ENCODE measurements at regions of chr1 and their contacts with region 1.

Region 1: DNA sequence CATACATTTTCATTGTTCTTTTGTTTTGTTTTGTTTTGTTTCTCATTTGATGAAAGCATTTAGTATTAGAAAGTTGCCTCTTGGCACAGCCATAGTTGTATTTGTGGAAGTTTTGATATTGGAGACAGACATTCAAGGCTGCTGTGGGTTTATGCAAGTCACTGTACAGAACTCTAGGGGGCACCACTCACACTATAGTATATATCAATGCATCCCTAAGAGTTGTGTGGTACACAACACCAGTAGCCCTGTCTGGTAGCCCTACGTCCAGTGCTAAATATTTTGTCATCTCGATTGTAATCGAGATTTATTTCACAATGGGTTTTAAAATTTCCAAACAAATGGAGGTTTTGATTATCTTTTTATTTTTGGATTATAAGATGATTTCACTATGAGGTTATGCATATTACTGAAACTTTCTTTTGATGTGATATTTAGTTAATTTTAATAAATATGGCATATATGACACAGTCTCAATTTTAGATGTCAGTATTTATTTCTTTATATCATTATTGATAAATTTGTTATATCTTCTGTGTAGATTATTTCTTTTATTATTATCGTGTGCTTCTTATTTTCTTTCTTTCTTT is 112.2 kb downstream of the NR5A2 start:
- DNase-seq: peak; percentile 25
- H3K4me3 ChIP-seq: no peak overlapping the region
- H3K27ac ChIP-seq: no peak overlapping the region
- H3K4me1 ChIP-seq: no peaks in the 10 kb centered on the region
- H3K27me3 ChIP-seq: no peaks in the 10 kb centered on the region
- CTCF ChIP-seq: no peak

Region 2: DNA sequence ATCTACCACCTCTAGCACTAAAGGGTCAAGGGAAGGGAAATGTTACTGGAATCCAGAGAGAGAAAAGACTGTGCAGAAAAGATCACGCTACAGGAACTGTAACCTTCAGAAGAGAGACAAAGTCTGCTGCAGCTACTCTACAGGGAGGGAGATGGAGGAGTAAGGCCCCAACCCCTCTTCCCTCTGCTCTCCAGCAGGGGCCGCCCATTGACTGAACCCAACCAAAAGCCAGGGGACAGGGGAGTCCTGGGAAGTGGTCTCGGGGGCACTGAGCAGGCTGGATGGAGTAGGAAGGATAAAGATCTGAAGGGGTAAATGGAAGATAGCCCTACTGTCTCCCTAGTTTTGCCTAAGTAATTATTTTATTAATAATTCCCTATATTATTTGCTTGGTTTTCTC is 185.1 kb before region 1 on chr1:
- intact Hi-C with region 1: loop called (anchors 10 kb)
- DNase-seq: peak; percentile 51
- H3K4me3 ChIP-seq: no peak overlapping the region
- H3K27ac ChIP-seq: no peak overlapping the region
- H3K4me1 ChIP-seq: no peaks in the 10 kb centered on the region
- H3K27me3 ChIP-seq: no peaks in the 10 kb centered on the region
- CTCF ChIP-seq: peak; percentile 32

Region 3: DNA sequence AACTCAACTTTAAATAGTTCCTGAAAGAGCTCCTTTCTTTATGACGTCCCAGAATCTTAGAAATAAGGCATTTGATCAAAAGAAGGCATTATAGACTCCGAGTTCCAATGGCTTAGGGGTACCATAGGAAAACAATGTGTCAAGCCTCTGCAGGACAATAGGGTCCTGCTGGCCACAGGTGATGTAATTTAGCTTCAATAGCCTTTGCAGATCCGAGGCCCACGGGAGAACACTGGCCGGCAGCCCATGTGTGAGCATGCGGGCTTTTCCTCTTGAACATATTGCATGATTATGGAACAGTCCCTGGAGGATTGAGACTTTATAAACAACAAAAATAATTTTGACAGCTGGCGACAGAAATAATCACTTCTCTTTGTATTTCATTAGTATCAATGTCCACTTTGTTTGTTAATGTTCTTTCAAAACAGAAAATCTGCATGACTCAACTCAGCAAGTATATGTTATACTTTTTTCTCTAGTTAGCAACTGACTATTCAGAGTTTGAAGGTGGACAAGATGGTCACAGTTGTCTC is 161.3 kb before region 1 on chr1:
- intact Hi-C with region 1: no loop called
- DNase-seq: no peak
- H3K4me3 ChIP-seq: no peak overlapping the region
- H3K27ac ChIP-seq: no peak overlapping the region
- H3K4me1 ChIP-seq: no peaks in the 10 kb centered on the region
- H3K27me3 ChIP-seq: no peaks in the 10 kb centered on the region
- CTCF ChIP-seq: no peak

Region 4: DNA sequence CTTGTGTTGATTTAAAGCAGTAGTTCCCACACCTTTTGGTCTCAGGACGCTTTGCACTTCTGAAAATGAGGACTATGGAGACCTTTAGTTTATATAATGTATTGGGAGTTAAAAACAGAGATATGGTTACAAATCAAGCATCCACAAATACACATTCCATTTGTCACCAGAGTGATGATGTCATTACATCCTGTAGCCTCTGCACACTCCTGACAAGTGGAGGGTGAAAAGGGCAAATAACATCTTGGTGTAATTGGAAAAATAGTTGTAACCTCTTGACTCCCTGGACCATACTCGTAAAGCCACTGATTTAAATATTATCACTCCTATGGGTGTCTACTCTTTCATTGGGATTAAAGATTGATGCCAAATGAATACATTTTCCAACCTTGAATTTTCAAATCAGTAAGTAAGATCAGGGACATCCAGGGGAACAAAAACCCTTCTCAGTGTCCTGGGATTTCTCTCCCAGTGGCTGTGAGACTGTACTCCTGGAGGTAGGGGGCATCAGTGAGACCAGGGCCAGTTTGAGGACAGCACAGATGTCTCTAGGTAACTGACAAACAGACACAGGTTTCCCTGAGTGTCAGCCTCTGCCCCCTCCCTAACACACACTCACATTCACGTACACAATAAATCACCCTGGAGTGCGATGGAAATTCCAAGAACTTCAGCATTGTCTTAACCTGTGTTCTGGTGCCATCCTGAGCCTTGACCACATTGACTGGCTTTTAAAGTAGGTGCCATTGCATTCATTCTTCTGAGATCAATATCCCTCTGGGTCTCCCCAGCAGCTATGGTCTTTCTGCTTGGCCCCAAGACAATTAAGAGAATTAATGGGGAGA is 49.3 kb before region 1 on chr1:
- intact Hi-C with region 1: no loop called
- DNase-seq: no peak
- H3K4me3 ChIP-seq: no peak overlapping the region
- H3K27ac ChIP-seq: no peak overlapping the region
- H3K4me1 ChIP-seq: no peaks in the 10 kb centered on the region
- H3K27me3 ChIP-seq: no peaks in the 10 kb centered on the region
- CTCF ChIP-seq: no peak

Region 5: GRCh38 chr1:200488375-200489165 is 348.8 kb after region 1 on chr1:
- intact Hi-C with region 1: loop called (anchors 10 kb)
- DNase-seq: peak; percentile 68
- H3K4me3 ChIP-seq: no peak overlapping the region
- H3K27ac ChIP-seq: no peak overlapping the region
- H3K4me1 ChIP-seq: no peaks in the 10 kb centered on the region
- H3K27me3 ChIP-seq: no peaks in the 10 kb centered on the region
- CTCF ChIP-seq: peak; percentile 79

Measured in colonic mucosa (tissue), 4 donors.